BJ (cell line): ENCODE measurements at regions of chr7 and their contacts with region 1.

Region 1: DNA sequence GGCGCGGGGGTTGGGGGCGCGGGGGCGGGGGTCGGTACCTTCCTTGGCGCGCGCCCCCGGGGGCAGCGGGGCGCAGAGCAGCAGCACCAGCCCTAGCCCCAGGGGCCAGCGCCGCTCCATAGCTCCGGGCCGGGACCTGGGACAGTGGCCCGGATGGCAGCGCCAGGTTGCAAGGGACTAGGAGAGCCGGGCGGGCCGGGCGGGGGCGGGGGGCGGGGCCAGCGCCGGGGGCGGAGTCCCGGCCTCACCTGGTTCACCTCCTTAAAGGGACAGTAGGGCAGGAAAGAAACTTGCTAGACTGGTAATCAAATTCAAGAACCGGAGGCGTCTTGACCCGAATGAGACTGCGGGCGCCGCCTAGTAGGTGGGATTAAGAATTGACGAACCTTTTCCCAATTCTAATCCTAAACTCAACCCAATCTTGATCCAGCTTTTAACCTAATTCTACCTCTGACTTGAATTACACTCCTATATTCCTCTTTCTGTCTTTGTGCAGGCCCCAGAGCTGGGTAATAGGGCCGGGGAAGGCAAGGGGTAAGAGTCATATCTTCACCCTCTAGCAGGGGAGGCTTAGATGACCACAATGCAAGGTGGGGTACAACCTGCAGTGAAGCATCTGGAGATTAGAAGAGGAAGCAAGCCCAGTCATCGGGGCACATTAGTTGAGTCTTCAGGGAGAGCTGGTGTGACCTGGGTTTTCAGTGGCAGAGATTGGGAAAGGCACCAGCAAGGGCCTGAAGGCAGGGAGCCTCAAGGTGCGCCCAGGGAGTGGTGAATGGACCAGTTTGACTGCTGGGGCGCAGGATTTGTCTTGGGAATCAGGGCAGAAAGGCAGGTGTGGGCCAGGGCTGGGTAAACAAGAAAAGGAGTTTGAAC is at the start of gene EPHA1:
- DNase-seq: no peak
- H3K4me3 ChIP-seq: no peak within 1 kb of the TSS
- H3K27me3 ChIP-seq: no peaks in the 10 kb centered on the region; the same call in 1 of the 2 replicates
- CTCF ChIP-seq: peak; percentile 30; the same call in 1 of the 2 replicates
- polyA plus RNA-seq, gene EPHA1: 0.05 TPM in 1 of 2 replicates, not detected in the other

Region 2: GRCh38 chr7:143391462-143392404 is 17.2 kb before region 1 on chr7:
- CTCF ChIA-PET with region 1: interaction called, 12 read pairs
- POLR2A ChIA-PET with region 1: interaction called, 4 read pairs
- DNase-seq: peak; percentile 41
- H3K4me3 ChIP-seq: no peak overlapping the region
- H3K27me3 ChIP-seq: no peaks in the 10 kb centered on the region
- CTCF ChIP-seq: no peak